ENCODE measurements at regions of chr2 and their contacts with region 1.

Region 1: GRCh38 chr2:32039447-32040219 is at the start of gene DPY30:
- DNase-seq: peak; percentile 95
- ATAC-seq: peak; percentile 94
- H3K4me3 Mint-ChIP-seq: peak within 1 kb of the TSS; percentile 90
- H3K27ac Mint-ChIP-seq: peak within 1 kb of the TSS; percentile 96
- H3K4me1 Mint-ChIP-seq: peaks cover 11% of the 10 kb centered on the region
- H3K27me3 Mint-ChIP-seq: no peaks in the 10 kb centered on the region
- total RNA-seq, gene DPY30: 74.2 to 78.6 TPM

Region 2: DNA sequence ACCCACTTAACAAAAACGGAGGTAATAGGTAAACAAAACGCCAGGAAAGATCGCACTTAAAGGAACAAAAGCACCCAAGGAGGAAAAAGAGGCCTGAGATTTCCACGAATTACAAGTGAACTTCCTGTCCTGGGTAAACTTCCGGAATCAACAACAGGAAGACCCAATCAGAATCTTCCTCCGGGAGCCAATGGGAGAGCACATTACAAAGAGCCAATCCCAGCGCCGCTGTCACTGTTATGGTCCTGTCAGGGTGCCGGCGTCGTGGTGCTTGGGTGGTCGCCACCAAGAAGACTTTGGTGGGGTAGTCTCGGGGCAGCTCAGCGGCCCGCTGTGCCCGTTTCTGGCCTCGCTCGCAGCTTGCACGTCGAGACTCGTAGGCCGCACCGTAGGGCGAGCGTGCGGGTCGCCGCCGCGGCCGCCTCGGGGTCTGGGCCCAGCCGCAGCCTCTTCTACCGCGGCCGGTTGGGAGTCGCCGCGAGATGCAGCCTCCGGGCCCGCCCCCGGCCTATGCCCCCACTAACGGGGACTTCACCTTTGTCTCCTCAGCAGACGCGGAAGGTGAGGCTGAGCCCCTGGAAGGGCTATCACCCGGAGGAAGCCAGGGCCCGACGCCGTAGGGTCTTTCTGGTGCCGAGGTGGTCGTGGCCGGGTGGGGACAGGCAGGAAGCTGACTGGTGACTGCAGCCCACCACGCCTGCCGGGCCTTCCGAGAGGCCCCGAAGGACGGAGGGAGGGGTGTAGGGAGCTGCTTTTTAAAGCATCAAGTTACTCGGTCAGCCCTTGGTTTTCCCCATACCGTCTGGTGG is 238.2 kb after region 1 on chr2 and contains the start of gene YIPF4:
- CTCF ChIA-PET with region 1: no interaction called
- POLR2A ChIA-PET with region 1: no interaction called
- intact Hi-C with region 1: loop called in 1 of 2 experiments (anchors 1 kb)
- DNase-seq: peak; percentile 89
- ATAC-seq: peak; percentile 99
- H3K4me3 Mint-ChIP-seq: peak within 1 kb of the TSS; percentile 94
- H3K27ac Mint-ChIP-seq: peak within 1 kb of the TSS; percentile 93
- H3K4me1 Mint-ChIP-seq: peaks cover 24% of the 10 kb centered on the region
- H3K27me3 Mint-ChIP-seq: no peaks in the 10 kb centered on the region
- total RNA-seq, gene YIPF4: 17.5 to 37.6 TPM

Measured in activated CD4-positive, alpha-beta T cell treated with anti-CD3 and anti-CD28 coated beads for 36 hours (primary cell).